ENCODE measurements at regions of chr17 and their contacts with region 1.

Region 1: DNA sequence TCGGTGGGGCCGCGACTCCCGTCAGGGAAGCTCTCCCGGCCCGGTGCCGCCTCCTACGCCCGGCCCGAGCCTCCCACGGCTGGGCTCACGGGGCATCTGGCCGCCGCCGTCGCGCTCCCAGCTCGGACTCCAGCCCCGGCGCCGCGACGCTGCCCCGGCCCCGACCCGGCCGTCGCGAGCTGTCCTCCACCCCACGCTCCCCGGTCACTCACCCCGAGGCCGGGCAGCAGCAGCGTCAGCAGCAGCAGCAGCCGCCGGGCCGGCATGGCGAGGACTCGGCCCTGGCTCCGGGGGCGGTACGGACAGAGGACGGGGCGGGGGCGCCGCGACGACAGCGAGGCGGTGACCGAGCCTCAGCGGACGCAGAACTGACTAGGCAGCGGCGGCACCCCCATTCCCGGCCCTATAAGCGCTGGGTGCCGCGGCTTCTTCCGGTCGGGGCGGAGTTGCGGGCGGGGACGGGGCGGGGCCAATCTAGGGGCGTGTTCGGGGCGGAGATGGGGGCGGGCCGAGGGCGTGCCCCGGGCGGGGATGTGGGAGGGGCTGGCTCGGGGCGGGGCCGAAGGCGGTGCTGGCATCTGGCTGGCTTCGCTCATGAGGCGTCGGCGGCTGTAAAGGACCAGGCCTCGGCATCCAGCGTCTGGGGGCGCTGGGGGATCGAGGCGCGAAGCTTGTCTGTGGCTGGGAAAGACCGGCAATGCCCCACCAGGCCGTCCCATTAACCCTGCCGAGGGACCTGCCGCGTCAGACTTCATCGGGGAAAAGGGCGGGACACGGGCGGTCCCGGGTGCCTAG is at the start of gene ERN1:
- DNase-seq: peak; percentile 84
- H3K4me3 ChIP-seq: peak within 1 kb of the TSS; percentile 91
- H3K27ac ChIP-seq: peak within 1 kb of the TSS; percentile 70
- H3K4me1 ChIP-seq: peaks cover 14% of the 10 kb centered on the region
- H3K27me3 ChIP-seq: no peaks in the 10 kb centered on the region
- CTCF ChIP-seq: no peak
- total RNA-seq, gene ERN1: 6.7 and 8.0 TPM in 2 replicates

Region 2: GRCh38 chr17:63961355-63962212 is 168.4 kb before region 1 on chr17:
- CTCF ChIA-PET with region 1: interaction called, 11 read pairs
- POLR2A ChIA-PET with region 1: no interaction called
- intact Hi-C with region 1: no loop called
- DNase-seq: peak; percentile 91
- H3K4me3 ChIP-seq: peak overlapping the region; percentile 28
- H3K27ac ChIP-seq: no peak overlapping the region
- H3K4me1 ChIP-seq: no peaks in the 10 kb centered on the region
- H3K27me3 ChIP-seq: no peaks in the 10 kb centered on the region
- CTCF ChIP-seq: no peak

Region 3: DNA sequence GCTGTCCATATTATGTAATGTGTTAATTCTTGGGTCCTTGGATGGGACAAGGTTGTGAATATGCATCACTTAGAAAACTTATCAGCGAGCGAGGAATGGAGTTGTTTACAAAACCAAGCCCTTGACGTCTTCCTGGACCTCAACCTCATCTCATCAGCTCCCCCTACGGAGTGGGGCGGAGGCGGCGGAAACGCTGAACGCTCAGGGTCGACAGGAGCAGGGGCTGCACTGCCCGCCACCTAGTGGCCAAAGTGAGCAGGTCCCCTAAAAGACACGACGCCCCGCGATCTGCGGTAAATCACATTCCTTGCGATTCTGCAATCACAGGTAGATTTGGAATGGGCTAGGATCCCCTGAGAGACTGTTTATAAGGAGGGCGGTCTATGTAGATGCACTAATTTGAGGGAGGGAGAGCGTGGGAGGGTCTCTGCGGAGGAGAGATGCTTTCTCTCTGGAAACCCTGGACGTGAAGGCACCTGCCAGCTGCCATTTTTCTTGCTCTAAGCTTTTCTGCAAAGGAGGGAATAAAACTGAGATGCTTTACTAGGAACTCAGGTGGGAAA is 104.1 kb before region 1 on chr17:
- CTCF ChIA-PET with region 1: interaction called, 100 read pairs
- POLR2A ChIA-PET with region 1: no interaction called
- intact Hi-C with region 1: loop called (anchors 1 kb)
- DNase-seq: peak; percentile 87
- H3K4me3 ChIP-seq: peak overlapping the region; percentile 13
- H3K27ac ChIP-seq: no peak overlapping the region
- H3K4me1 ChIP-seq: no peaks in the 10 kb centered on the region
- H3K27me3 ChIP-seq: no peaks in the 10 kb centered on the region
- CTCF ChIP-seq: peak; percentile 99

Region 4: DNA sequence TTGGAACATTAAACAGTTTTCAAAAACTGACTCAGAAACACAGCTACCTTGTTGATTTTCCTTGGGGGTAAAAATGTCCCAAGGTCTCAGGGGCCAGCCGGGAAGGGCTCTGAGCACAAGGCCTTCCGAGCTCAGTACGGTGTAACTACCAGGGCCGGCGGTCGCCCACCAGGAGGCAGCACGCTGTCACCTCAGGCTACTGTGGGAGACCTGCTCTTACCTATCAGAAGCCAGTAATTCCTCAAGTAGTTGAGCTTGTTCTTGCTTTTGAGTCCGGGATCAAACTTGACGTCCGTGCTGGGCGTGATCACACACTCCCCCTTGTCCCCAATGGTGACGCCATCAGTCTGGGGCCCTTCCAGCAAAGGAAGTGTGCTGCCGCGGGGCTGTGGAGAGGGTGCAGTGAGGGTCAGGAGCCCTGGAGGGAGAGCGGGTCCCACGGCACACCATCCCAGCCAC is 66.2 kb before region 1 on chr17:
- CTCF ChIA-PET with region 1: interaction called, 29 read pairs
- POLR2A ChIA-PET with region 1: no interaction called
- intact Hi-C with region 1: loop called (anchors 2 kb)
- DNase-seq: no peak
- H3K4me3 ChIP-seq: no peak overlapping the region
- H3K27ac ChIP-seq: no peak overlapping the region
- H3K4me1 ChIP-seq: no peaks in the 10 kb centered on the region
- H3K27me3 ChIP-seq: no peaks in the 10 kb centered on the region
- CTCF ChIP-seq: peak; percentile 58